Common myeloid progenitor, CD34-positive (primary cell): ENCODE measurements at regions of chr9 and their contacts with region 1.

Region 1: GRCh38 chr9:114155263-114155972 is at the start of gene COL27A1:
- DNase-seq: peak; percentile 65 to 84 (median 80)
- H3K4me3 ChIP-seq: peak within 1 kb of the TSS; percentile 11 to 76 (median 58)
- H3K27ac ChIP-seq: no peak within 1 kb of the TSS
- H3K4me1 ChIP-seq: peaks cover 0 to 28% (median 16%) of the 10 kb centered on the region in 4 experiments
- H3K27me3 ChIP-seq: peaks cover 0 to 67% (median 30%) of the 10 kb centered on the region in 5 experiments

Region 2: DNA sequence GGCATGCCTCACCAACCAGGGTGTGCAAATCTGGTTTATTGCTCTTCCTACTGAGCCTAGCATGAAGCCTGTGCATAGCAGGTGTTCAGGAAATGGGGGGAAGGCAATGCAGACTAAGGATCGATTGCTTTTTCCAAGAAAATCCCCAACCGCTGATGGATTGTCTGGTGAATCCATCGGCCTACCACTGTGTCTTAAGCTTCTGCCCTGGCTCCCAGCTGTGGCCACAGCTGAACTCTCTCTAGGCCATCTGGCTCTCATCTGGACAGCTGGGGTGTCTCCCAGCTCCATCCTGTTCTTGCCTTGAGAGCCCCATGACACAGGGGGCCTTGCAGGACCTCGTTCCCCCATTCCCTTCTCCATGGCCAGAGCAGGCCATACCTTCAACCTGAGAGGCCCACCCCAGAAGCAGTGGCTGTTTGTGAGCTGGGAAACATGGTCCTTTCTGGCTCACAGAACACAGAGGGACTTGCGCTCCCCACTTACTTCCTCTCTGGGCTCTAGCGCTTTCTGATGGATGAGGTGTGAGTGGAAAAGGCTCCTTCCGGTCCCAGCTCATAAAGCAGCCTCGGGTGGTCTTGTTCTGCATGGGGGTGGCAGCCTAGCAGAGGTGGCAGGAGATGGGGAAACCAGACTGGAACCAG is 41.7 kb after region 1 on chr9:
- CTCF ChIA-PET with region 1: no interaction called
- POLR2A ChIA-PET with region 1: no interaction called
- DNase-seq: no peak
- H3K4me3 ChIP-seq: no peak overlapping the region
- H3K27ac ChIP-seq: no peak overlapping the region
- H3K4me1 ChIP-seq: no peaks in the 10 kb centered on the region
- H3K27me3 ChIP-seq: peaks cover 0 to 5% (median 0%) of the 10 kb centered on the region in 5 experiments

Region 3: DNA sequence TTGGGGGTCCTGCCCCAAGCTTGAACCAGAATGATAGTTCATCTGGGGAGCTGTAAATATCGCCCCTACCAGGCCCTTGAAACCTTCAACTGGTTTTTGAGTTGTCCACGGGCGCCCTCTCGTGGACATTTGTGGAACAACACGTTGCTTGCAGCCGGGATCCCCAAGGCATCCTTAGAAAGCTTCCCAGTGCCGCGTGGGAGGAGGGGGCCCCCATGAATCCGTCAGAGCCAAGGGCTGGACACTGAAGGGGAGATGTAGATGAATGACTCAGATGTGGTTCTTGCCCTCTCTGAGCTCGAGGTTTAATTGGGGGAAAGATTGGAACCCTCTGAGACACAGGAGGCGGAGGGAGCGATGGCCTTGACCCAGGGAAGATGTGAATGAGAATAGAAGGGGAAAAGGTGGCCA is 135.7 kb after region 1 on chr9:
- CTCF ChIA-PET with region 1: interaction called, 10 read pairs
- POLR2A ChIA-PET with region 1: no interaction called
- DNase-seq: peak; percentile 55 to 72 (median 58)
- H3K4me3 ChIP-seq: no peak overlapping the region
- H3K27ac ChIP-seq: no peak overlapping the region
- H3K4me1 ChIP-seq: peaks cover 0 to 1% (median 0%) of the 10 kb centered on the region in 4 experiments
- H3K27me3 ChIP-seq: no peaks in the 10 kb centered on the region

Region 4: GRCh38 chr9:114484854-114485443 is 329.5 kb after region 1 on chr9:
- CTCF ChIA-PET with region 1: no interaction called
- POLR2A ChIA-PET with region 1: no interaction called
- DNase-seq: peak in 2 of 3 donors; percentile 57 to 65
- H3K4me3 ChIP-seq: no peak overlapping the region
- H3K27ac ChIP-seq: no peak overlapping the region
- H3K4me1 ChIP-seq: peaks cover 5 to 28% (median 7%) of the 10 kb centered on the region in 4 experiments
- H3K27me3 ChIP-seq: no peaks in the 10 kb centered on the region